ENCODE measurements at regions of chr11 and their contacts with region 1.

Region 1: DNA sequence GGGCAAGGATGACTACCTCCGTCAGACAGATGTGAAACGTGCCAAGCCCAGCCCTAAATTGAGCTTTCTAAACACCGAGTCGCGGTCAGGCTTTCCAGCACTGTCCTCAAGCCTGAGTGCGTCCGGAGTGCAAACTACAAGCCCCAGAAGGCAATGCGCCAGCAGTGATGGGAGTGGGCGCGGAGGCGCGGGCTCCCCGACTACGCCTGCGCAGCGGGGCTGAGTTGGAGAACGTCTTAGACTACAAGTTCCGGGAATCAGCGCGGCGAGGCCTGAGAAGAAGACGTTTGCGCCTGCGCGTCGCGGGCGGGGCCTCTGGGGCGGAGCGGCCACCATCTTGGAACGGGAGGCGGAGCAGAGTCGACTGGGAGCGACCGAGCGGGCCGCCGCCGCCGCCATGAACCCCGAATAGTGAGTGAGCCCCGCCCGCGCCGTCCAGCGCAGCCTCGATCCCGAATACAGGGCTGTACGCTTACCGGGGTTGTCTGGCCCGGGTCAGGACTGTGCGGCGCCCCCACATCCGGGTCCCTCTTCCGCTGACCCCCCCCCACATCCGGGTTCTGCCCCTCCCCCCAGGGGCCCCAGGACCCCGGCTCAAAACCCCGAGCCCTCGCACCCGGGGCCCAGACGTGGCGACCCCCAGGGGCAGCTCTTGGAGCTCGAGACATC is at the start of gene RAB1B:
- H3K4me3 ChIP-seq: peak within 1 kb of the TSS; percentile 92
- H3K27ac ChIP-seq: peak within 1 kb of the TSS; percentile 73
- H3K4me1 ChIP-seq: peaks cover 2% of the 10 kb centered on the region; the same call in 1 of the 2 replicates
- CTCF ChIP-seq: no peak

Region 2: DNA sequence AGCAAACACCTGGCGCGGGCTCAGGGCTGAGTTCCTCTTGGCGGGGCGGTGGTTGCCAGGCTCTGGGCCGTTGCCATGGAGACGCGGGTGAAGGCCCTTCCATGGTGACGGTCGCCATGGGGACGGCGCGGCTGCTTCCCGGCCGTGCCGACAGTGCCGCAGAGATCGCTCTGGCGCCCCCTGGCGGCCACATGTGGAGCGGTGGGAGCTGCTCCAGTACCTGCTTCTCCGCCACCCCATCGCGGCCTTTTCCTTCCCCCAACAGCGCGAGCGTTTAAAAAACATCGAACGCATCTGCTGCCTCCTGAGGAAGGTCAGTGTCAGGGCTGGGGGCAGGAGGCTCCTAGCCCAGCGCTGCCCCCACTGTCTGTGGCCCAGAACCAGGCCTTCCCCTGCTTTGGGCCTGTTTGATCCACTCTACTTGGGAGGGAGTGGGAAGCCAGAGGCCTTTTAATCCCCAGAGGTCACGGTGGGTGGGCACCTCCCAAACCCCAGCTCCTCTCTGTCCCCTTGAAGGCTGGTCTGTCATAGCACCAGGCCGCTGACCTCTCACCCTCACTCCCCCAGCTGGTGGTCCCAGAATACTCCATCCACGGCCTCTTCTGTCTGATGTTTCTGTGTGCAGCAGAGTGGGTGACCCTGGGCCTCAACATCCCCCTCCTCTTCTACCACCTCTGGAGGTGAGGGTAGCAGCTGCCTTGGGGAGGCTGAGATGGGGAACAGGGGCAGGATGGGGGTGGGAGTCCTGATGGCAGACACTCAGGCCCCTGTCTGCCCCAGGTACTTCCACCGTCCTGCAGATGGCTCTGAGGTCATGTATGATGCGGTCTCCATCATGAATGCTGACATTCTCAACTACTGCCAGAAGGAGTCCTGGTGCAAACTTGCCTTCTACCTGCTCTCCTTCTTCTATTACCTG is 14.3 kb after region 1 on chr11:
- CTCF ChIA-PET with region 1: interaction called, 24 read pairs
- POLR2A ChIA-PET with region 1: interaction called, 8 read pairs
- H3K4me3 ChIP-seq: no peak overlapping the region
- H3K27ac ChIP-seq: no peak overlapping the region
- H3K4me1 ChIP-seq: no peaks in the 10 kb centered on the region
- CTCF ChIP-seq: peak; percentile 93